WTC11 (cell line): ENCODE measurements at regions of chr1 and their contacts with region 1.

Region 1: GRCh38 chr1:20151906-20152598 is 12.9 kb downstream of the PLA2G2F start:
- DNase-seq: peak; percentile 90
- ATAC-seq: peak; percentile 91
- H3K4me3 Mint-ChIP-seq: peak overlapping the region; percentile 42
- H3K27ac Mint-ChIP-seq: no peak overlapping the region
- H3K4me1 Mint-ChIP-seq: peaks cover 28% of the 10 kb centered on the region
- H3K27me3 Mint-ChIP-seq: no peaks in the 10 kb centered on the region
- CTCF ChIP-seq: peak; percentile 88

Region 2: GRCh38 chr1:19872190-19872589 is 279.9 kb before region 1 on chr1:
- CTCF ChIA-PET with region 1: no interaction called
- POLR2A ChIA-PET with region 1: no interaction called
- DNase-seq: no peak
- ATAC-seq: no peak
- H3K4me3 Mint-ChIP-seq: no peak overlapping the region
- H3K27ac Mint-ChIP-seq: no peak overlapping the region
- H3K4me1 Mint-ChIP-seq: no peaks in the 10 kb centered on the region
- H3K27me3 Mint-ChIP-seq: peaks cover 8% of the 10 kb centered on the region
- CTCF ChIP-seq: no peak

Region 3: DNA sequence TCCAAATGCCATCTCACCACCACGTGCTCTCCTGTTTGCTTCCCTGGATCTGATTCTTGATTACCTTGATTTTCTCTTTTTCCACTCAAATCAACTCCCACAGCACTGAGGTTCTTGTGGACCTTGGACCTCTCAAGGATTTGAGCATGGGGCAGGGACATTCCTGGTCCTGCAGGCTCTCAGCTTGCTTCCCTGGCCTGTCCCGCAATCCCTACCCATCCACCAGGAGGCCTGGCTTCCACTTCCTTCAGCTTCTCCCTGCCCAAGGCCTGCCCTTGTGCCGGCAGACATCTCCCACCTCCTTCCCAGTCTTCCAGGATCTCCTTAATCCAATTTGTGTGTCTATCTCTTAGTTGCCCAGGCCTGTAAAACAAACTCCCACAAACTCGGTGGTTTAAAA is 194.3 kb before region 1 on chr1:
- CTCF ChIA-PET with region 1: interaction called, 14 read pairs
- POLR2A ChIA-PET with region 1: no interaction called
- DNase-seq: peak; percentile 31
- ATAC-seq: peak; percentile 69
- H3K4me3 Mint-ChIP-seq: no peak overlapping the region
- H3K27ac Mint-ChIP-seq: no peak overlapping the region
- H3K4me1 Mint-ChIP-seq: peaks cover 27% of the 10 kb centered on the region
- H3K27me3 Mint-ChIP-seq: peaks cover 14% of the 10 kb centered on the region
- CTCF ChIP-seq: no peak

Region 4: GRCh38 chr1:20100632-20101355 is 51.3 kb before region 1 on chr1:
- CTCF ChIA-PET with region 1: interaction called, 14 read pairs
- POLR2A ChIA-PET with region 1: no interaction called
- DNase-seq: peak; percentile 75
- ATAC-seq: peak; percentile 99
- H3K4me3 Mint-ChIP-seq: no peak overlapping the region
- H3K27ac Mint-ChIP-seq: peak overlapping the region; percentile 78; the same call in 1 of the 2 replicates
- H3K4me1 Mint-ChIP-seq: peaks cover 3% of the 10 kb centered on the region
- H3K27me3 Mint-ChIP-seq: peaks cover 17% of the 10 kb centered on the region
- CTCF ChIP-seq: peak; percentile 62

Region 5: GRCh38 chr1:20136249-20136648 is 15.8 kb before region 1 on chr1:
- CTCF ChIA-PET with region 1: no interaction called
- POLR2A ChIA-PET with region 1: no interaction called
- DNase-seq: no peak
- ATAC-seq: no peak
- H3K4me3 Mint-ChIP-seq: no peak overlapping the region
- H3K27ac Mint-ChIP-seq: no peak overlapping the region
- H3K4me1 Mint-ChIP-seq: no peaks in the 10 kb centered on the region
- H3K27me3 Mint-ChIP-seq: 0 out of 2 replicates have a peak, but pooled peaks cover 3% of the 10 kb centered on the region
- CTCF ChIP-seq: no peak

Region 6: GRCh38 chr1:20165522-20165951 is 13.5 kb after region 1 on chr1:
- CTCF ChIA-PET with region 1: interaction called, 33 read pairs
- POLR2A ChIA-PET with region 1: no interaction called
- DNase-seq: peak; percentile 36
- ATAC-seq: peak; percentile 69
- H3K4me3 Mint-ChIP-seq: no peak overlapping the region
- H3K27ac Mint-ChIP-seq: no peak overlapping the region
- H3K4me1 Mint-ChIP-seq: peaks cover 20% of the 10 kb centered on the region
- H3K27me3 Mint-ChIP-seq: peaks cover 6% of the 10 kb centered on the region
- CTCF ChIP-seq: peak; percentile 34; the same call in 1 of the 2 replicates